ENCODE measurements at regions of chr5 and their contacts with region 1.

Region 1: GRCh38 chr5:136802383-136802782 is 437.0 kb upstream of the TRPC7 start:
- DNase-seq: no peak
- ATAC-seq: peak in 1 of 2 donors; percentile 29

Region 2: DNA sequence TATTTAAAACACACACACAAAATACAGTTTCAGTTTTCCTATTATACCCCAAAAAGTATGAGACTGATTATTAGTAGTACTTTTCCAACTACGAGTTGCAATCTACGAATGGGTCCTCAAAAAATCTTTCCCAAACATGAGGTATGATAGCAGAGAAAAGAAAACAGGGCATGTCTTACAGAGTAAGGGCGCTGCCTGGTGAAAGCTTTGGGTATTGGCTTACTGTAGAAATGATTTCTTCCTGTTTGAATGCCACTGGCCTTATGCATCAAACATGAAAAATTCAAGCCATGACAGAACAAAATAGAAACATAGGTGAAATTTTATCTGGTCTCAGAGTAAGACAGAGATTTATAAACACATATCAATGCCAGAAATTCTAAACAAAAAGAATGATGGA is 248.8 kb after region 1 on chr5:
- intact Hi-C with region 1: loop called (anchors 5 to 10 kb)
- DNase-seq: no peak
- ATAC-seq: no peak

Region 3: DNA sequence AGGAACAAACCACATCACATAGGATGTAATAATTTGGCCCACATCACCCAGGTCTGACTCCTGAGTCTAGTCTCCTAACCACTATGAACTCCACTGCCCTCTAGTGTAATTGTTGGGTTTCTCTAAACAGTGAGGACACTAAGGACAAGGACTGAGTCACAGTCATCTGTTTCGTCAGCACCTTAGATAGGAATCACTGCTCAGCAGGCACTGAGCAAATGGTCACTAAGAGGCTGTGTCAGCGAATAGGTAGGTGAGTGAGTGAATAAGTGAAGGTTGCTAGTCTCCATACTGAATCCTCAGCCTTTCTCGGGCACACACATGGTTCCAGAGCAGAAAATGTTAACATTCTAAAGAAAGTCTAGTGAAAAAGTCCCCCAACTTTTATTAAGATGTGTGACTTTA is 418.1 kb after region 1 on chr5:
- intact Hi-C with region 1: loop called in 1 of 2 experiments (anchors 10 kb)
- DNase-seq: no peak
- ATAC-seq: peak in 1 of 2 donors; percentile 79

Measured in left cardiac atrium (tissue), 4 donors.